Posterior cingulate gyrus (tissue), 11 donors: ENCODE measurements at regions of chr5 and their contacts with region 1.

Region 1: DNA sequence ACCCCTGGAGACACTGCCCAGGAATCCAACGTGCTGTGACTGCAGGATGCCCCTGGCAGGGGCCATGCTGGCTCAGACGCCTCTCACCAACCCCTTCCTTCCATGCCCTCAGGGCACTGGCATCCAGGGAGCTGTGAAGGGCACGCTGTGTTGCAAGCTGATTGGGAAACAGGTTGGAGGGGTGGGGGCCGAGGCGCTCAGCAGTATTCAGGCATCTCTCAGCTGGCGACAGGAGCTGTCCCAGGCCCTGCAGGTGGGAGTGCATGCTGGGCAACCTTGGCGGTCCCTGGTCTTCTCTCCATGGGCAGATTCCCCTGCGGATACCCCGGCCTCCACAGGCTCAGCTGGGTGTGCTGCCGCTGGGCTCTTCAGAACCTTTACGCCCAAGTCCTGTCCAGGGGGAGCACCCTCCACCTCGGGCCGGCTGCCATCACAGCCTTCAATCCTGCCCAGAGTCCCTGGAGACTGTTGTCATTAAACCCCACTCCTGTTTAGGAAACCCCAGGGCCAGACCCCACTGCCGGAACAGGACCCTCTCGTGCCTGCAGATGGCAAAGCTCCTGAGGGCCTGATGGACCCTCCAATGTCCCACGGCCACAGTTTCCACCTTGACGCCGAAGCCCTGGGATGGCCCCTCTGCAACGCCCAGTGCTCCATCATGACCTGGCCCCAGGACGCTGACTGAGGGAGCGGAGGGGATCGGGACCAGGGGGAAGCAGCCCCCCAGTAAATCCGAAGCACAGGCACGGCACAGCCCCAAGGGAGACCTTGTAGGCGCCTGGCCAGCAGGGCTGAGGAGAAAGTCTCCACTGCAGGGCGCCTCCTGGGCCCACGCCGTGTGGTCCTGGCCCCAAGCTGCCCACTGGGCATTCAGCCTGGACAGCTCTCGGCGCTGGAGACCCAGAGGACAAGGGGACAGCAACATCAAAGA is 9.3 kb downstream of the TPPP start:
- DNase-seq: peak in 8 of 10 donors; percentile 9 to 79 (median 16)

Region 2: DNA sequence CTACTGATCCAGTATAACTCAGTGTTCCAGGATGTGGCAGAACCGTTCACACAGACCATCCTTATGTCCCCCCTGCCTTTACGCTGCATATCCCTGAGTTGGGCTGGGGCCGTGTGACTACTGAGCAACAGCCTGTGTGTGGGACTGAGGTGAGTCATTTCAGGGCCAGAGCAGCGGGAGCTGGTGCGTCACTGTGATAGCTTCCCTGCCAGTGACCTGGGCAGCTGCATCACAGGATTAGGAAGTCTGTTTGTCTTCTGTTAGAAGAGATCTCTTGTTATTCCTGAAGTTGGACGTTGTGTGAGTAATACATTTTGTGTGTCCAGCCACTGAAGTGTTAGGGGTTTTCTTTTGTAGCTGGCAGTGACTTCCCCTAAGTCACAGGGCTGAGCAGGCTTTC is 26.2 kb before region 1 on chr5:
- intact Hi-C with region 1: no loop called
- DNase-seq: peak in 3 of 10 donors; percentile 27 to 80 (median 67)

Region 3: GRCh38 chr5:775963-776791 is 92.4 kb after region 1 on chr5:
- intact Hi-C with region 1: loop called (anchors 1 kb)
- DNase-seq: peak in 4 of 10 donors; percentile 16 to 75 (median 59)